Calu3 (cell line): ENCODE measurements at regions of chrX and their contacts with region 1.

Region 1: GRCh38 chrX:9388450-9388849 is 76.4 kb upstream of the TBL1X start:
- DNase-seq: no peak
- H3K4me3 Mint-ChIP-seq: no peak overlapping the region
- H3K27ac Mint-ChIP-seq: no peak overlapping the region
- H3K4me1 Mint-ChIP-seq: no peaks in the 10 kb centered on the region
- H3K27me3 Mint-ChIP-seq: no peaks in the 10 kb centered on the region
- CTCF ChIP-seq: no peak

Region 2: DNA sequence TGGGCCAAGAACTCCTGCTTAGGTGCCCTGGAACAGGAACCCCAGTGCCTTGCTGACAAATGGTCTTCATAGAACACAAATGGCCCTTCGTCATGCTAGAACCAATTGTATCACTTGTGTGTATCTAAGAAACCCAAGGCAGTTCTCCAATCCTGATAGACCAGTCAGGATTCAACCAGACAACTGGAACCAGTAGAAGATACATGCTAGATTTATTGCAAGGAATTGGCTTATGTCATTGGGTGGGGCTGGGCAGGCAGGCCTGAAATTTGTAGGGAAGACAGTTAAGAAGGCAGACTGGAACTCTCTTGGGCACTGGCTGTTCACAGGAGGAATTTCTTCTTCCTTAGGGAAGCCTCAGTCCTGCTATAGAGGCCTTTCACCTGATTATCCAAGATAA is 59.5 kb after region 1 on chrX:
- CTCF ChIA-PET with region 1: interaction called, 11 read pairs
- intact Hi-C with region 1: no loop called
- DNase-seq: no peak
- H3K4me3 Mint-ChIP-seq: no peak overlapping the region
- H3K27ac Mint-ChIP-seq: no peak overlapping the region
- H3K4me1 Mint-ChIP-seq: no peaks in the 10 kb centered on the region
- H3K27me3 Mint-ChIP-seq: no peaks in the 10 kb centered on the region
- CTCF ChIP-seq: no peak

Region 3: DNA sequence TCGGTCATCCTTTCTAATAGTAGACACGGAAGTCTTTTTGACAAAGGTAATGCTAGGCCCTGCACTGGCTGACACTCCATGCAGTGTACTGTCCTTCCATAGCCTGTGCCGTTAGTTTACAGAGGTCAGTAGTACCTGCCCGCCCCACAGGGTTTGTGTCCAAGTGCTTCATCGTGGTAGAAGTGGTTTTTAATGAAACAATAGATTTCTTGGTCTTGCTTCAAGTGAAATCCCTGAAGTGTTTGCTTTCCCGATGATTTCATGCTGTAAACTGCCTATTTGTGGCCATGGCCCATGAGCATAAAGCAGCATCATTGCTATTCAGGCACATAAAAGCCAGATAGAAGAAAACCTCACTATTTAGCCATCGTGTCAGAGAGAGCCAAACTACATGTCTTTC is 237.9 kb after region 1 on chrX:
- CTCF ChIA-PET with region 1: no interaction called
- intact Hi-C with region 1: no loop called
- DNase-seq: no peak
- H3K4me3 Mint-ChIP-seq: no peak overlapping the region
- H3K27ac Mint-ChIP-seq: no peak overlapping the region
- H3K4me1 Mint-ChIP-seq: no peaks in the 10 kb centered on the region
- H3K27me3 Mint-ChIP-seq: no peaks in the 10 kb centered on the region
- CTCF ChIP-seq: no peak